Sigmoid colon (tissue), 7 donors: ENCODE measurements at regions of chr4 and their contacts with region 1.

Region 1: GRCh38 chr4:186669159-186669731 is 54.4 kb downstream of the FAT1 start:
- DNase-seq: peak; percentile 74
- H3K4me3 ChIP-seq: peak overlapping the region in 2 of 4 donors; percentile 21
- H3K27ac ChIP-seq: peak overlapping the region; percentile 34 to 76 (median 64)
- H3K4me1 ChIP-seq: peaks cover 0 to 66% (median 42%) of the 10 kb centered on the region in 4 donors
- H3K27me3 ChIP-seq: no peaks in the 10 kb centered on the region
- CTCF ChIP-seq: peak; percentile 15 to 59 (median 40)
- EP300 ChIP-seq: peak in 3 of 4 donors; percentile 82 to 95 (median 84)
- POLR2A ChIP-seq: no peak

Region 2: DNA sequence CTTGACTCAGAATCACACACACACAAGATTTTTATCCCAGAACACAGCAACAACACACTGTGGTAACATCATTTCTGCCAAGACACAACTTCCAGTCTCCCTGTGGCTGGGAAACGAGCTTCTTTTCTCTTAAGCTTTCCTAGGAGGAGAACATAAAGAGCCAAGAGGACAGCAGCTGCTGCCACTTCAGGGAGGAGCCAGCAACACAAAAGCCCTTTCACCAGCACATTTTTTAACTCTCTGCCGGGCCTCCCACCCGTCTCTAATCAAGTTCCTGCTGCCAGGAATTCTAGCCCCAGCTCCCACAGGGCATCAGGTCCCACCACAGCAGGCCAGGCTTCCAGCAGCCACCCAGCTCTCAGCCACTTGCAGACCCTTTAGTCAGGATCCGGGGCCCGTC is 32.0 kb after region 1 on chr4:
- intact Hi-C with region 1: no loop called
- DNase-seq: no peak
- H3K4me3 ChIP-seq: peak overlapping the region in 3 of 4 donors; percentile 11 to 26 (median 17)
- H3K27ac ChIP-seq: peak overlapping the region; percentile 72 to 85 (median 75)
- H3K4me1 ChIP-seq: peaks cover 0 to 73% (median 63%) of the 10 kb centered on the region in 4 donors
- H3K27me3 ChIP-seq: no peaks in the 10 kb centered on the region
- CTCF ChIP-seq: no peak
- EP300 ChIP-seq: no peak
- POLR2A ChIP-seq: no peak

Region 3: DNA sequence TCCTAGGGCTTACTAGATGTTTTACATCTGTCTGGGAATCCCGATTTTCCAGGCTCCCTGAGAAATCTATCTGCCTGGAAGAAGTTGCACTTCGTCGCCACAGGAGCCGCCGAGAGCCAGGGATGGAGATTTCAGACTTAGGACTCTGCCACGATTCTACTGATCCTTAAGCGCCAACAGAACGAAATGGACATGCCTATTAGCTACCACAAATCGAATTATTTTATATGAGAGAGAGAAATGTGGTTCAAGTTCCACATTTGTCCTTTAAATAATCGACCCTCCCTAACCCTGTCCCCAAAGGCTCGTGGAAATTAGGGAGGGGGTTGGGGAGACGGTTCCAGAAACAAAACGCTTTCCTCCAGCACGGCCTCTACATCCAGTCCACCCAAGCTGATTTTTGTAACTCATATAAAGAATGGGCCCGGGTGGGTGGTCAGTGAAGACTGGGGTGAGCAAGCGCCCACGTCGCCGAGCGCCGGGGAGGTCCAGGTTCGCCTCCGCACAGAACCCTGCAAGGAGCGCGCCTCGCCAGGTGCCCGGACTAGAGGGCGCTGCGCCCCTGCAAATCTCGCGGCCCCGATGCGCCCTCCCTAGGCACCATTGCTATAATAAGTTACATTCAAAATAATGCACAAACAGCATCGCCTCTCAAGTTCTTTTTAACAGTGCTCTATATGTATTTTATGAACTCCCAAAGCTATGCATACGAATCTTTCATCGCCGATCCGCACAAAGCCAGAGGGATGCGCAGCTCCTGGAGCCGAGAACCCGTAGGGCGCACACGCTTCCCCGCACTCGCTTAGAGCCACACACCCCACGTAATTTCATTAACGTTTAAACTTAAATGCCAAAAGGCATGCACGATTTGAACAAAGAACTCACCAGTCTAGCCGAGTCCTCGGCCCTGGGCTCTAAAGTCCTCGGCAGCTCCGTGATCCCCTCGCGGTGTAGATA is 56.5 kb after region 1 on chr4:
- intact Hi-C with region 1: loop called (anchors 2 kb)
- DNase-seq: peak; percentile 90
- H3K4me3 ChIP-seq: peak overlapping the region; percentile 73 to 91 (median 88)
- H3K27ac ChIP-seq: peak overlapping the region; percentile 87 to 97 (median 92)
- H3K4me1 ChIP-seq: peaks cover 0 to 43% (median 16%) of the 10 kb centered on the region in 4 donors
- H3K27me3 ChIP-seq: no peaks in the 10 kb centered on the region
- CTCF ChIP-seq: peak; percentile 9 to 54 (median 24)
- EP300 ChIP-seq: no peak
- POLR2A ChIP-seq: no peak

Region 4: GRCh38 chr4:186746581-186746980 is 77.3 kb after region 1 on chr4:
- intact Hi-C with region 1: no loop called
- DNase-seq: no peak
- H3K4me3 ChIP-seq: no peak overlapping the region
- H3K27ac ChIP-seq: no peak overlapping the region
- H3K4me1 ChIP-seq: no peaks in the 10 kb centered on the region
- H3K27me3 ChIP-seq: no peaks in the 10 kb centered on the region
- CTCF ChIP-seq: no peak
- EP300 ChIP-seq: no peak
- POLR2A ChIP-seq: no peak

Region 5: DNA sequence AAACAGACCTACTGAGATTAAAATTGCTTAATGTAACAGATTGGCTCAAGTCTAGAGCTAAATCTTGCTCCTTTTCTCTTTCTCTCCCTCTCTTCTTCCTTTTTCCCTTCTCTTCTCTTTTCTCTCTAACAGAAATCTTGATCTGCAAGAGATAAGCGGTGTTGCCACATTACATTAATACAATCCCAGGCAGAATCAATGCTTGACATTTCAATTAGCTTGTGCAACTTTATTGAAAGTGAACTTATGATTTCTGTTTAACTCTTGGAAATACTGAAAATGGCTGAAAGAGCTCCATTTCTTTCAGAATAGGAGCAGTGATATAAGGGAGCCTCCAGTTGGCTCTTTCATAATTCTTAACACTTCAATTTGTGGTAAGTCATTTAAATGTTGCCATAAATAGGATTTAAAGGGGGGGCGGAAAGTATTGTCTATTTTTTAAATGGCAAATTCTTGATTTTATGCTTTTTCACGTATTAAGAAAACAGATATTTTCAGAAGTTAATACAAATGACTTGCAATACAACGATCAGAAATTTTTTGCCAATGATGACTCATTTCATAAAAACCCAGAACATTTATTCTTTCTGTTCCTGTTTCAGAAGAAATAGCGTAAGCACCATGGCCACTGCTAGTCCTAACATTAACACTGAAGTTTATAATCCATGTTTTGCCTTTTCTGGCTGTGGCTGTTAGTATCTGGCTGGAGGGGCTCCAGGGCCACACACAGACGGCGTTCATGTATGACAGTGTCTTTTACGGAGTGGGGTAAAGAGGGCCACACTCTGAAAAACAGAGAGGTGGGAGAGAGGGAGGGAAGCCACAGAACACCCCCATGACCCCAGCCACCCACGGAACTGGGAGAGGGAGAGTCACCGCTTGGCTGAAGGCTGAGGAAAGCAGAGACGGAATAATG is 170.1 kb after region 1 on chr4:
- intact Hi-C with region 1: loop called (anchors 10 kb)
- DNase-seq: peak; percentile 69
- H3K4me3 ChIP-seq: peak overlapping the region in 3 of 4 donors; percentile 3 to 31 (median 7)
- H3K27ac ChIP-seq: peak overlapping the region; percentile 67 to 81 (median 75)
- H3K4me1 ChIP-seq: peaks cover 0 to 8% (median 6%) of the 10 kb centered on the region in 4 donors
- H3K27me3 ChIP-seq: no peaks in the 10 kb centered on the region
- CTCF ChIP-seq: no peak
- EP300 ChIP-seq: no peak
- POLR2A ChIP-seq: no peak